AG04450 (cell line): ENCODE measurements at regions of chr19 and their contacts with region 1.

Region 1: GRCh38 chr19:46753420-46754155 is 7.3 kb upstream of the STRN4 start:
- DNase-seq: no peak
- H3K4me3 ChIP-seq: no peak overlapping the region
- H3K27ac ChIP-seq: no peak overlapping the region
- H3K27me3 ChIP-seq: no peaks in the 10 kb centered on the region
- CTCF ChIP-seq: peak; percentile 46

Region 2: DNA sequence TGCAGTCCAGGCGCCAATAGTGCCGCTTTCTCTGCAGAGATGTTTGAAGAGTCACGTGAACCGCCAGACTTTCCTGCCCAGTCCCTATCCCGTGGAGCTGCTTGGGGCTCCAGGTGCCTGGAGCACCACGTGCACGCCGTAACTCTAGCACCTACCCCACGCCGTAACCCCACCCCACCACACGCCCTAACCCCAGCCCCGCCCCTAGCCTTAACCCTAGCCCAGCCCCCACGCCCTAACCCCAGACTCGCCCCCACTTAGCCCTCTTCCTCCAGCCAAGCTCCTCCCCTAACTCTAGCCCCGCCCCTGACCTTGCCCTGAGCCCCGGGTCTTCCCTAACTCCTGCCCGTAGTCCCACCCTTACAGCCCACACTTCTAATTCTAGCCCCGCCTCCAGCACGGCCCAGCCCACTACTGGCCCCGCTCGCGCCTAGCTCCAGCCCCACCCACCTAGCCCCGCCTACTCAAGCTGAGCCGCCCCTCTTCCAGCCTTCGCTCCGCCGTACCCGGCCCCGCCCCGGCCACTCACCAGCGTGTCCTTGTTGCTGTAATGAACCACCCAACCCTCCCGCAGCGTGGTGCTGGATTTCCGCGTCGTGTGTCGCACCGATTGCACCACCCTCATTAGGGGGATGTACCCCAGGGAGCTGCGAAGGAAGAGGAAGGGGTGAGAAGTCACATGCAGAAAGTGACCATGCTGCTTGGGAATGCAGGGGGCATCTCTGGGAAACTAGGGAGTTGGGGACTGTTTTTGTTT is 56.2 kb before region 1 on chr19:
- CTCF ChIA-PET with region 1: no interaction called
- POLR2A ChIA-PET with region 1: no interaction called
- DNase-seq: no peak
- H3K4me3 ChIP-seq: no peak overlapping the region
- H3K27ac ChIP-seq: no peak overlapping the region
- H3K27me3 ChIP-seq: no peaks in the 10 kb centered on the region
- CTCF ChIP-seq: no peak

Region 3: DNA sequence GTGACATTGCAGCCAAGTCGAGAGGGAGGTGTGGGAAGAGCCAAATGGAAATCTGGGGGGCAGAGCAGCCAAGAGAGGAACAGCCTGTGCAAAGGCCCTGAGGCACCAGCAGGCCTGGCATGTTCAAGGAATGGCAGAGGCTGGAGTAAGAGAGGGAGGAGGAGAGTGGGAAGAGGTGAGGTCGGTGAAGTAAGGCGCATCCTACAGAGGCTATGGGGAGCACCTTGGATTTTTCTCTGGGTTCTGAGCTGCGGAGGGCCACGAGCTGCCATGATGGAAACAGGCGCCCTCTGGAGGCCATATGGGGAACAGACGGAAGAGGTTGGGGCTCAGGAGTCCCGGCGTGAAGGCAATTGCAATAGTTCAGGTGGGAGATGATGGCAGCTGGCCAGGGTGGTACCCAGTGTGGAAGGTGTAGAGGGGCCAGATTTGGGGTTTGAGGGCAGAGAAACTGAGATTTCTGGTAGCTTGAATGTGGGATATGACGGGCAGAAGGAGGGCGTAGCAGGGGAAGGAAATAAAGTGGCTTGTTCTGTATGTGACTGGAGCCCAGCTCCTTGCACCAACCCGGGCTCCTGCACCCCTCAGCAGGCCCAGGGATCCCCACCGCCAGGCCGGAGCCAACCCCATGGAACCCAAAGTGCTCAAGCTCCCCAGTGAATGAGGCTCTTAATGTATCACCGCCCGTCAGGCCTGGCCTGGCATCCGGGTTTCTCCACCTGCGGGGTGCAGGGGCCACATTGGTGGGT is 13.2 kb after region 1 on chr19:
- CTCF ChIA-PET with region 1: interaction called, 17 read pairs
- POLR2A ChIA-PET with region 1: interaction called, 3 read pairs
- DNase-seq: no peak
- H3K4me3 ChIP-seq: no peak overlapping the region
- H3K27ac ChIP-seq: no peak overlapping the region
- H3K27me3 ChIP-seq: no peaks in the 10 kb centered on the region
- CTCF ChIP-seq: peak; percentile 68